Gastrocnemius medialis (tissue), 4 donors: ENCODE measurements at regions of chr12 and their contacts with region 1.

Region 1: GRCh38 chr12:76083904-76084862 is at the start of gene NAP1L1:
- DNase-seq: peak; percentile 97
- ATAC-seq: peak; percentile 94 to 95
- H3K4me3 ChIP-seq: peak within 1 kb of the TSS; percentile 79 to 97 (median 92)
- H3K27ac ChIP-seq: peak within 1 kb of the TSS; percentile 93 to 99 (median 96)
- H3K4me1 ChIP-seq: peaks cover 27 to 30% of the 10 kb centered on the region in 2 donors
- H3K27me3 ChIP-seq: no peaks in the 10 kb centered on the region
- CTCF ChIP-seq: peak in 1 of 5 experiments; percentile 18
- POLR2A ChIP-seq: peak; percentile 90 to 97
- total RNA-seq, gene NAP1L1: 336 to 660 (median 421) TPM

Region 2: GRCh38 chr12:75390899-75391538 is 693.2 kb before region 1 on chr12 and contains the start of gene GLIPR1L2:
- in situ Hi-C with region 1: no loop called
- intact Hi-C with region 1: loop called (anchors 5 kb)
- DNase-seq: peak; percentile 90 to 95
- ATAC-seq: peak; percentile 96 to 98
- H3K4me3 ChIP-seq: peak within 1 kb of the TSS; percentile 65 to 84 (median 76)
- H3K27ac ChIP-seq: peak within 1 kb of the TSS; percentile 84 to 93 (median 90)
- H3K4me1 ChIP-seq: peaks cover 23 to 24% of the 10 kb centered on the region in 2 donors
- H3K27me3 ChIP-seq: no peaks in the 10 kb centered on the region
- CTCF ChIP-seq: peak; percentile 73 to 86 (median 79)
- POLR2A ChIP-seq: peak; percentile 68 to 77
- total RNA-seq, gene GLIPR1L2: 0.33 to 1.0 (median 0.49) TPM in 3 of 4 donors, not detected in the other

Region 3: DNA sequence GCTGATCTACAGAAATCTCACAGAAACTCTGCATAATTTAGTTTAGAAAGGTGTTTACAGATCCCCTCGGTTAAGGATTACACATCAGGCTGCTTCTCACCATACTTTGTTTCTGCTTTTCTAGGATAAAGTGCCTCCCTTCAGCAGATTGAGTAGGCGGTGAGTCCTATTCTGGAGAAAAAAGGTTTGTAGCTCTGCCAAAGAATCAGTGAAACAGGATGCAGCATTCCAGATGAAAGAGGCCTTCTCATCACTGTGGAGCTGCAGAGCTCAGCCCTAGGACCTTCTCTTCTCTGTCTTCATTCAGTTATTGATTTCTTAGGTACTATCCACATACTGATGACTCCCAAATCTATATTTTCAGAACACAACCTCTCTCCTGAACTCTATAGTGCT is 417.2 kb before region 1 on chr12:
- in situ Hi-C with region 1: no loop called
- intact Hi-C with region 1: no loop called
- DNase-seq: no peak
- ATAC-seq: no peak
- H3K4me3 ChIP-seq: no peak overlapping the region
- H3K27ac ChIP-seq: no peak overlapping the region
- H3K4me1 ChIP-seq: no peaks in the 10 kb centered on the region
- H3K27me3 ChIP-seq: no peaks in the 10 kb centered on the region
- CTCF ChIP-seq: no peak
- POLR2A ChIP-seq: no peak

Region 4: DNA sequence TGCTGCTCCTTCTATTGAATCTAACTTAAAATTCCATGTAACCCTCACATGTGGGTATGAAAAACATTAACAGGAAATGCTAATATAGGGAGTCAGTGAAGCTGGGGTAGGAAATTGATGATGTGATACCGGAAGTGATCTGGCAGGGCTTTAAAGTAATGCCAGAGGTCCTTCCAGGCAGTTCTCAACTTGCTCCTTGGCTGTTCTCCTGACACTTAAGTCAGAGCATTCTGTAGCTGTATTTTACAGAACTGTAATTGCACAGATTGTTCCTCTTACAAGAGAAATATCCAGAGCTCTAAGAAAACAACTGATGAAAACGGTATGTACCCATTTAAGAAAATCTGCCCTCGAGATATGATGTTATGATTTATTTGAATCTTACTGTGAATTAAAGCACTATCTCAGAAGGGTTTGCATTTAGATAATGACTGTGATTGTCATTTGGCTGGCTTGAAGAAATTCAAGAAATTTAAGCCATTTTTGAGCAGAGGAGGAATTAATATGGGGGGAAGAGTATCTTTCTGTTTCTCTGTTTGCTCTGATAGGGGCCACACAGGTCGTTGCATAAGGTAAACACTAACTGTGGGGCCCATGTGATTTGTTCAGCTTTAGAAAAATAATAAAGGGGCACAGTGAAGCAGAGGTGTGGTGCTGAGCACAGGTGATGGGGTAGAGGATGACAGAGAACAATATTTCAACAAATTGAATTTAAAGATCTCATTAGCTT is 175.6 kb after region 1 on chr12:
- in situ Hi-C with region 1: no loop called
- intact Hi-C with region 1: loop called (anchors 5 kb)
- DNase-seq: peak; percentile 28 to 50
- ATAC-seq: peak; percentile 63 to 88
- H3K4me3 ChIP-seq: peak overlapping the region in 2 of 4 donors; percentile 9 to 32
- H3K27ac ChIP-seq: peak overlapping the region; percentile 78 to 90 (median 82)
- H3K4me1 ChIP-seq: peaks cover 27 to 50% of the 10 kb centered on the region in 2 donors
- H3K27me3 ChIP-seq: no peaks in the 10 kb centered on the region
- CTCF ChIP-seq: no peak
- POLR2A ChIP-seq: peak in 1 of 2 donors; percentile 29

Region 5: DNA sequence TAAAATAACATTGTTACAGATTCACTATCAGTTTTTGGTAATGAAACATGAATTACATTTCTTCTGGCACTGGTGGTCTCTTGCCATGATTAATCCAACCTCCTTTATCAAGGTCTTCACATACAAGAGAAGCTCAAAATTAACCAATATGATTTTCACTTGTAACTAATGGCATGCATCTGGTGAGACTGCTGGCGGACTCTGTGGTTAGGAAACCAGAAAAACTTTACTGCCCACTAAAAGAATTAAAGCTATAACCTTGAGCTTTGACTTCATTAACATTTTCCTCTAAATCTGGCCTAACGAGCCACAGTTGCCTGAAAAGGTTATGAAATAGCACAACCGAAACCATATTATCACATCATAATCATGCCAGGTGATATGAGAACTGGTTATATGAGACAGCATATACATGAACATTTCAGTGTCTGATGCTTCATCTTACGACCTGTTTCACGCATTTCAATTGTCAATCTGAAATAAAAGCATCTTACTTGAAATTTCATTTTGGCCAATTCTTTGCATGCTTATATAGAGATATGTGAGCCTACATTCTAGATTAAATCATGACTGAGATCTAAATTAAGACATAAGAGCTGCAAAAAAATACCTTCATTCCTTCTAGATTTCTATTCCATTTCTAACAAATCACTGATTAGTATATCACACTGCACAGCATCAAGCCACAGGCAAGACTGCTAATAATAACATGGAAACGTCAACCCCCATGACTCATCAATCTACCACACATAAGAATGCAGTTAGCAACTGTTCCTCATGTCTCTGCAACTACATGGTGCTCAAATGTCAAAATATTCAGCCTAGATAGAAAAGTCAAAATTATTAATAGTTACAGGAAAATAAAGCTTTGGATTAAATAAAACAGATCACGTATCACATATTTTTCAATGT is 386.1 kb after region 1 on chr12:
- in situ Hi-C with region 1: no loop called
- intact Hi-C with region 1: loop called (anchors 10 kb)
- DNase-seq: peak; percentile 23 to 59
- ATAC-seq: peak; percentile 100
- H3K4me3 ChIP-seq: peak overlapping the region in 1 of 4 donors; percentile 4
- H3K27ac ChIP-seq: peak overlapping the region; percentile 79 to 87 (median 84)
- H3K4me1 ChIP-seq: peaks cover 31 to 41% of the 10 kb centered on the region in 2 donors
- H3K27me3 ChIP-seq: no peaks in the 10 kb centered on the region
- CTCF ChIP-seq: no peak
- POLR2A ChIP-seq: no peak

Region 6: DNA sequence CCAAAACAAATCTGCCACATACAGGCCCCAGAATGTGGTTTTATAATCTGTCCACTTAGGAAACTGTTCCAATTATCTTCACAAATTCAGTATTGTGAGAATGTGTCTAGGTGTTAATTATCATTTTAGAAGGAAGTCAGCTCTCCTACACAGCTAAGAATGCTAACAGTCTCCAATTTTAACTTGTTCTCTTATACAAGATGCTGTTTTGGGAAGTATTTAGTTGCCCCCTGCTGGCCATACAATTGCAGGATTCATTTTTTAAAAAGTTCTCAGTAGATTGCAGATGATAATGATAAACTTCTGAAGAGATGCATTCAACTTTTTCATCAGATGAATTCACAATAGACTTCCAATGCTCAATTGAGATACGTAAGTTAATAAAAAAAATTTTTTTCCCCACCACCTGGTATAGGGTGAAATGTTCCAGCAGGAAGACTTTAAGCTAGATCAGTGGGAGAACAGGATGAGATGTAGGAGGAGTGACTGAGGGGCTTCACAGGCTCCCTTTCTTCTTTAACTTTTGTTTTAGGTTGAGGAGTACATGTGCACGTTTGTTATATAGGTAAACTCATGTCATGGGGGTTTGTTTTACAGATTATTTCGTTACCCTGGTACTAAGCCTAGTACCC is 502.7 kb after region 1 on chr12:
- in situ Hi-C with region 1: no loop called
- intact Hi-C with region 1: loop called (anchors 5 kb)
- DNase-seq: peak in 1 of 2 donors; percentile 30
- ATAC-seq: no peak
- H3K4me3 ChIP-seq: no peak overlapping the region
- H3K27ac ChIP-seq: peak overlapping the region; percentile 88 to 97 (median 90)
- H3K4me1 ChIP-seq: peaks cover 15 to 16% of the 10 kb centered on the region in 2 donors
- H3K27me3 ChIP-seq: no peaks in the 10 kb centered on the region
- CTCF ChIP-seq: peak; percentile 55 to 76 (median 64)
- POLR2A ChIP-seq: no peak

Region 7: GRCh38 chr12:76790564-76791552 is 706.7 kb after region 1 on chr12:
- in situ Hi-C with region 1: loop called in 1 of 4 experiments (anchors 25 kb)
- intact Hi-C with region 1: no loop called
- DNase-seq: no peak
- ATAC-seq: peak in 1 of 2 donors; percentile 58
- H3K4me3 ChIP-seq: no peak overlapping the region
- H3K27ac ChIP-seq: peak overlapping the region in 3 of 4 donors; percentile 27 to 59 (median 27)
- H3K4me1 ChIP-seq: peaks cover 33 to 40% of the 10 kb centered on the region in 2 donors
- H3K27me3 ChIP-seq: no peaks in the 10 kb centered on the region
- CTCF ChIP-seq: peak; percentile 70 to 96 (median 75)
- POLR2A ChIP-seq: no peak